ENCODE measurements at regions of chr2 and their contacts with region 1.

Region 1: DNA sequence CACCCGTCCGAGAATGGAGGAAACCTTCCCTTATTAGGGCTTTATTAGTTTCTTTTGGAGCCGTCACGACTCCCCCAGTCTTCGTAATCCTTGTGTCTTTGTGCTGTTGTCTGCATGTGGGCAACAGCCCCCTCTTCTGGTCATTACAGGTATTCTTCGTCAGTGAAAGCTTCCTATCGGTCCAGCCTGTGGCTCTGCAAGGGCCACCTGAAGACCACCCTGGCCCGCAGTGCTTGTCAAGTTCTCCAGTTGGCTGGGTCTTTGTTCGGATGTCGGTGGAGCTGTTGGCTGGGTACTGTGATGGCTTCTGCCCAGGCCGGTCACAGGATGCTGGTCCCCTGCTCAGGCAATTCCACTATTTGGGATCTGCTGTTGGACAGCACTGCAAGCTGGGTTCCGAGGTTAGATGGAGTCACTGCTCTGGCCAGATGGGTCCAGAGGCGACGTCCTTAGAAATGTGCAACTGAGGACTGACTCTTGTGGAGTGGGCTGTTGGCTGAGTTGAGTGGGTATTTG is 19.2 kb downstream of the E2F6 start:
- DNase-seq: no peak
- H3K4me3 Mint-ChIP-seq: no peak overlapping the region
- H3K27ac Mint-ChIP-seq: no peak overlapping the region
- H3K4me1 Mint-ChIP-seq: no peaks in the 10 kb centered on the region
- H3K27me3 Mint-ChIP-seq: no peaks in the 10 kb centered on the region

Region 2: DNA sequence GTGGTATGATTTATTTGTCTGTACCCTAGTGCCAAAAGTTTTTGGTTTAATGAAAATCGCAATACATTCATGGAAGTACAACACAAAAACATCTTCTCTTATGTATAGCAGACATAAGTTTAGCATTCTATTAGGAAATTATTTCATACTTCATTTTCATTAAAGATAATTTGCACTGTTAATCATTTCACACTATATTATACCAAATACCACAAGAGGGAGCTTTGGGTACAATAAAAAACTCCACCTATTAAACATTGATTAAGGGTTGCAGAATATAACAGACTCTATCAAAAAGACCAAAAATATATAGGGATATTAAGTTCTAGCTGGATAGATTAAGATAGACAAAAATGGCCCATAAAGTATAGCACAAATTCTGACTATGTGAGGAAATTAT is 212.5 kb before region 1 on chr2:
- intact Hi-C with region 1: loop called (anchors 5 kb)
- DNase-seq: no peak
- H3K4me3 Mint-ChIP-seq: no peak overlapping the region
- H3K27ac Mint-ChIP-seq: no peak overlapping the region
- H3K4me1 Mint-ChIP-seq: peaks cover 8% of the 10 kb centered on the region
- H3K27me3 Mint-ChIP-seq: no peaks in the 10 kb centered on the region

Region 3: DNA sequence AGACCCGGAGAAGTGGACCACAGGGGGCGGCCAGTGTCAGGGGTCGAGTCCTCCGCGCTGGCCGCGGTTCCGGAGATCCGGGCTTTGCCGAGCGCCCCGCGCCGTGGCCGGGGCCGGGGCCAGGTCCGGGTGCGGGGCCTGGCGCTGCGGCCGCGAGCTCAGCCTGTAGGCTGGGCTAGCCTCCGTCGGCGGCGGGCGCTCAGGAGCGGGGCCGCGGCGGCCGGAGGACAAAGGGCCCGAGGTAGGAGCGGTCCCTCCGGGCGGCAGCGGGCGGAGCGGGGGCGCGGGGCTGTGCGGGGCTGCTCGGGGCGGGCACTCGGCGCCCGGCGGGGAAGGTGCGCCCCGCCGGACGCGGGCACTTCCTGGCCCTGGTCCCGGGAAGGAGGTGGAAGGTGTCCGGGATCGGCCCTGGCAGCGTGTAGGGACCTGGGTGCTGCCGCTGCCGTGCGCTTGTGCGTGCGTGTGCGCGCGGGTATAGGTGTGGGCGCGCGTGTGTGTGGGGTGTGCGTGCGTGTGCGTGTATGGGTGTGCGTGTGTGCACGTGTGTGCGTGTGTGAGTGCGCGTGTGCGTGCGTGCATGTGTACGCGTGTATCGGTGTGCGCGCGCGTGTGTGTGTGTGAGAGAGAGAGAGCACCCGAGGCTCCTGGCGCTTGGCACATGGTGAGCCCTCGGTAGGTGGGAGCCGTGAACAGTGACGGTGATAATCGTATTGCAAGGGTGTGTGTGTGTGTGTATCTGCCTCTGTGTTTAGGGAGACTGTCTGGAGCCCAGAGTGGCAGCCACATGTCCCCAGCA is 36.1 kb after region 1 on chr2:
- intact Hi-C with region 1: no loop called
- DNase-seq: no peak
- H3K4me3 Mint-ChIP-seq: peak overlapping the region; percentile 74
- H3K27ac Mint-ChIP-seq: peak overlapping the region; percentile 55
- H3K4me1 Mint-ChIP-seq: no peaks in the 10 kb centered on the region
- H3K27me3 Mint-ChIP-seq: peaks cover 52% of the 10 kb centered on the region

Region 4: GRCh38 chr2:11493282-11493681 is 46.5 kb after region 1 on chr2:
- intact Hi-C with region 1: no loop called
- DNase-seq: no peak
- H3K4me3 Mint-ChIP-seq: no peak overlapping the region
- H3K27ac Mint-ChIP-seq: no peak overlapping the region
- H3K4me1 Mint-ChIP-seq: no peaks in the 10 kb centered on the region
- H3K27me3 Mint-ChIP-seq: peaks cover 6% of the 10 kb centered on the region

Measured in activated T-helper 1 cell treated with anti-CD3 and anti-CD28 coated beads, Interleukin-12 subunit alpha, Interleukin-12 subunit beta, Interleukin-2, Interleukin-4 antibody, amounts not matched to agents 30 ng/mL and 10 ng/mL and 1 ng/mL, durations not matched to agents 14 hours and 24 hours and 36 hours (primary cell).